ENCODE measurements at regions of chr7 and their contacts with region 1.

Region 1: DNA sequence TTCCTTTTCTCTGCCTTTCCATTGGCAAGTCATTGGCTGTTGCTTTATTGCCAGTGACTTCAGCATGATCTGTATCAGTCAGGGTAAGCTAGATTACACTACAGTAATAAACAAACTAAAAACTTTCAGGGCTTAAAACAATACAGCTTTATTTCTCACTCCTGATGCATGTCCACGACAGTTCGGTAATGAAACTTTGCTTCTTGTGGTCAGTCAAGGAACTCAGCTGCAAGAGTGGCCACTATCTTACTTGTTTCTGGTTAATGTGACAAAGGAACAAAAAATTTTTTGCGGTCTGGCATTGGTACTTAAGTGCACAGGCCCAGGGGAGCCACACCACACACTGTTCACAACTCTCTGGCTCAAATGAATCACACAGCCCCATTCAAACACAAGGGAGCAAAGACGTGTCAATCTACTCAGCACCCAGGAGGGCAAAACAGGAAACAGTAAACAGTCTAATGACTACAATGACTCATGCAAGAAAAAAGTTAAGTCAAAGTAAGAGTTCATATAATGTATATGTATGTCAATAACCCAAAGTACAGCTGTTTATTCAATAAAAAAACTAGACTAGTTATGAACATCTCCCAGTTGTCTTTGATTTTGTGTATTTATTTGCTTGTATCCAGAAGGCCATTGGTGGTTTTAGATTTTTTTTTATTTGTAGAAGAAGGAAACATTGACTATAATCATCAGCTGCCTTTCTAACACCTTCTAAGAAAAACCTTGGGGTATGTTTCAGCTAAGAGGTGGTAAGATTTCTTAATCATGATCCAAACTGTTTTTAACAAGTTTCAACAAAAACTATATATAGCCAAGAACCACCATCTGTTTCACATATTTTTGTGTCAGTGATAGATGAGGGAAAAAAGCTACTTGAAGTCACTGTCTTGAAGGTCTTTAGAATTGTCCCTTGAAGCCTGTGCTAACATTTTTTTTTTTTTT is 134.4 kb upstream of the FAM3C start:
- DNase-seq: peak; percentile 72
- H3K4me3 Mint-ChIP-seq: peak overlapping the region; percentile 57
- H3K27ac Mint-ChIP-seq: peak overlapping the region; percentile 98
- H3K4me1 Mint-ChIP-seq: peaks cover 47% of the 10 kb centered on the region
- H3K27me3 Mint-ChIP-seq: no peaks in the 10 kb centered on the region

Region 2: DNA sequence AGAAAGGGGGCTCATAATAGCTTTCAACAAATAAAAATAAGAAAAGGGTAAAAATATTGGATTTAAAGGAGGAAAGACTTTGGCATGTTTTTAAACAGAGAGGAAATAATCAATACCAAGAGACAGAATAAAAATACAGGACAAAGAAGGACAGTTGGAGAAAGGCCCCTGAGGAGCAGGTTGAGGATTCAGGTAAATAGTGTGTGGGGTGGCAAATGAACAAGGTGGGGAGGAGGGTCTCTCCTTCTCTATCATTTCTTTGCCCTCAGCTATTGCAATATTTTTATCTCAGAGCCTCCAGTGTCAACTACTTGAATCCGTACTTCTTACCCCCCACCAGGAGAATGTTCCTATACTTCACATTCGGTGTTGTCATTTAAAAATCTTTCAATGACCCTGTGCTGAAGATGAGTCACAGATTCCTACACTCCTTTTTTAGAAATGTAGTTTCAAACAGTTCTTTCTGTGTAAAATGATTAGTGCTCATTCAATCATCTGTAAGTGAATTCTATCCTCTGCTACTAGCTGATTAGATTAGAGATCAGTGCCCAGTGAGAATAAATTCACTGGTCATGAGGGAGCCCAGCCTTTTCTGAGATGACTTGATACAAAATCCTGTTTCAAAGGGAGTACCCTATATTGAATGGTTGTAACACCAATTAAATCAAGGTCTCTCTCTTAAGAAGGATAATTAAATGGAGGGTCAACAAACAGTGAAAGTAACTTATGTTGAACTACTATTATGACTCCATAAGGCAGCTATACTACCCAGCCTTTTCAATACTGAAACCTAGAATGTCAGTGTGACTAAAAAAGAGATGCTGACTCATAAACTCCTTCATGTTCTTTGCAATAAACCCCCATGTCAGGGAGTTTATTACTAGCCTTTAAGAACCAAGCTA is 252.1 kb before region 1 on chr7:
- intact Hi-C with region 1: loop called (anchors 1 kb)
- DNase-seq: no peak
- H3K4me3 Mint-ChIP-seq: no peak overlapping the region
- H3K27ac Mint-ChIP-seq: no peak overlapping the region
- H3K4me1 Mint-ChIP-seq: peaks cover 18% of the 10 kb centered on the region
- H3K27me3 Mint-ChIP-seq: peaks cover 8% of the 10 kb centered on the region

Region 3: DNA sequence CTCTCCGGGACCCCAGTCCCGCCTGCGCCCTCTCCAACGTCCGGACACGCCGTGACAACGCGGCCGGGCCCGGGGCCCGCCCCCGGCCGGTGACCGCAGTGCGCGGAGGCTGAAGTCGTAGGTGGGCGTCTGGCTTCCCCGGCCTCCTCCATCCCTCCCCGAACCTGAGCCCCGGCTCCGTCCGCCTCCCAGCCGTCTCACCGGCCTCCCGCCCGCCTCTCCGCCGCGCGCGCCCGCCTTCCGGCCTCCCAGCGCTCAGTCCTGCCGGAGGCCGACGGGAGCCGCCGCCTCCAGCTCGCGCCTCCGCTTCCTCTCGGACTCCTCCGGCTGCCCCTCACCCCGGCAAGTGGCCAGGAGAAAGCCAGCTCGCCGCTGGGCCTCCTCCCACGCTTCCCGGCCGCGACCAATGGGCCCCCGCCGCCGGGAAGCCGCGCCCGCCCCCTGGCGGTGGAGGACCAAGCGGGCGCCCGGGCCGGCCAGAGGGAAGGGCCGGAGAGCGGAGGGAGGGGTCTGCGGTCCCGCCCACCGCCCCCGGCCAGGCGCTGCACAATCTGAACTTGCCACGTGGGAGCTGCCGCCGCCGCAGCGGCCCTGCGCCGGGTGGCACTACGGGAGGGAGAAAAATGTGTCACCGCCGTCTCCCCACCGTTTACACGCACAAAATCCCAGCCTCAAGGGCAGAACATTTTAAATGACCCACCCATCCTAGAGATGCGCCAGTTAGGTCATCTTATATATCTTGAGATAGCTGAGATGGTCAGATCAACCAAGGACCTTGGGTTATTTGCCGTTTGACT is 134.3 kb before region 1 on chr7 and contains the start of gene FAM3C:
- intact Hi-C with region 1: loop called (anchors 1 kb)
- DNase-seq: peak; percentile 83
- H3K4me3 Mint-ChIP-seq: peak within 1 kb of the TSS; percentile 88
- H3K27ac Mint-ChIP-seq: peak within 1 kb of the TSS; percentile 95
- H3K4me1 Mint-ChIP-seq: peaks cover 51% of the 10 kb centered on the region
- H3K27me3 Mint-ChIP-seq: no peaks in the 10 kb centered on the region
- total RNA-seq, gene FAM3C: 103 and 114 TPM in 2 replicates

Region 4: DNA sequence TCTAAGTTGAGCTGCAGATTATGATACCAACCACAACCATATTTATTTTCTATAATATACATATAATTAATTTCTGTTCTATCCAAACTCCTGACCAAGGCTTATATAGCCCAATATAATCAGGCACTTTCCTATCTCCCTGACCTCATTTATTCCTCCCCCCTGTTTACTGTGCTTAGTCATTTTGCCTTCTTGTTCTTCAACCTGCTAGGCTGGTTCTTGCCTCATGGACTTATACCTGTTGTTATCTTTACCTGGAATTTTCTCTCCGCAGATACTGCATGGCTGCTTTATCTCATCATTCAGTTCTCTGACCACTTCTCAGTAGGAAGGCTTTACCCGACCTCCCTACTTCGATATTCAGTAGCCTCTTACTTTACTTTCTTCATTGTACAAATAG is 109.5 kb before region 1 on chr7:
- intact Hi-C with region 1: no loop called
- DNase-seq: no peak
- H3K4me3 Mint-ChIP-seq: no peak overlapping the region
- H3K27ac Mint-ChIP-seq: no peak overlapping the region
- H3K4me1 Mint-ChIP-seq: no peaks in the 10 kb centered on the region
- H3K27me3 Mint-ChIP-seq: peaks cover 3% of the 10 kb centered on the region

Region 5: GRCh38 chr7:121485467-121486243 is 44.8 kb before region 1 on chr7:
- intact Hi-C with region 1: loop called (anchors 1 kb)
- DNase-seq: no peak
- H3K4me3 Mint-ChIP-seq: no peak overlapping the region
- H3K27ac Mint-ChIP-seq: no peak overlapping the region
- H3K4me1 Mint-ChIP-seq: peaks cover 17% of the 10 kb centered on the region
- H3K27me3 Mint-ChIP-seq: no peaks in the 10 kb centered on the region

Region 6: DNA sequence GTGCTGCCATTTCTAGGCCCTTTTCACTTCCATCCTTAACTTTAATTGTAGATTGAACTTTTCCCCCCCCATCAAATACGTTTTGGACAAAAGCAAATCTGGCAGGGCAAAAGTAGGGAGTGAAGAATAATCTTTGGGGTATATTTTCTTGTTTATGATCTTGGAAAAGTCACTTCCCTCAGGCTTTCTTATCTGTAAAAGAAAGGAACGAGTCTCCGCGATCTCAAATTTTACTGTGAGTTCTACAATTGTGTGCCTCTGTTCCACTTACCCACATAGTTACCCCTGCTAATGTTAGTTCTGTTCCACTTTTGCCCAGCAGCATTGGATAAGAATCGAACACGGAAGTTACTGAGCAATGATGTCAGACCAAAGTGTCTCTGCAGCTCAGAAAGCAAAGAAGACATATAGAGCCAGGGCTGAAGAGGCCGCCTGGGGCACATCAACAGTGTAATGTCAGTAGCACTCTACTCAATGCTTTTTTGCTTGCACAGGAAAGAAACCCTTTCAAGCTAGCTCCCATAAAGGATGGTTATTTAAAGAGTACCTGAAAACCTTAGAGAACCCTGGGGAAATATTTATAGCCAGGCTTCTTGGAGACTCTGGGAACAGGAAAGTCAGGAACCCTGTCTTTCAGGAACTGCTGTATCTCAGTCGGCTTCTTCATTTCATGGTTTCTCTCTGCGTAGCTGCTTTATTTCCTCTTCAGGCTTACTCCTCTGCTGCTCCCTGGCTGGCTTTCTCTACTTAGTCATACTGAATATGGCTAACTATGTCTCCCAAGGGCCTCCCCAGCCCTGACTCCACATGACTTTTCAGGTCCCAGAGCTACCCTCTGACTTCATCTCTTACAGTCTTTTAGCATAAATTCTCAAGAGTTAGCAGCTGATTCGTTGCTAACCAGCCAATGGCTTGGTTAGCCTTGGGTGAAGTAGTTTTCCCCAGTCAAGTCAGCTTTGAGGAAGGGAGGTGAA is 10.7 kb before region 1 on chr7:
- intact Hi-C with region 1: loop called (anchors 1 kb)
- DNase-seq: no peak
- H3K4me3 Mint-ChIP-seq: no peak overlapping the region
- H3K27ac Mint-ChIP-seq: peak overlapping the region; percentile 37
- H3K4me1 Mint-ChIP-seq: peaks cover 40% of the 10 kb centered on the region
- H3K27me3 Mint-ChIP-seq: no peaks in the 10 kb centered on the region

Measured in activated T-helper 1 cell treated with anti-CD3 and anti-CD28 coated beads, Interleukin-12 subunit alpha, Interleukin-12 subunit beta, Interleukin-2, Interleukin-4 antibody, amounts not matched to agents 30 ng/mL and 10 ng/mL and 1 ng/mL, durations not matched to agents 14 hours and 24 hours and 36 hours (primary cell).